Naive thymus-derived CD4-positive, alpha-beta T cell (primary cell): ENCODE measurements at regions of chr20 and their contacts with region 1.

Region 1: GRCh38 chr20:18412221-18412901 is 54.5 kb downstream of the DZANK1 start:
- DNase-seq: no peak
- ATAC-seq: peak; percentile 33
- H3K4me3 ChIP-seq: no peak overlapping the region
- H3K4me3 Mint-ChIP-seq: no peak overlapping the region
- H3K27ac ChIP-seq: no peak overlapping the region
- H3K27ac Mint-ChIP-seq: no peak overlapping the region
- H3K4me1 ChIP-seq: no peaks in the 10 kb centered on the region
- H3K4me1 Mint-ChIP-seq: peaks cover 0 to 7% (median 3%) of the 10 kb centered on the region in 7 donors
- H3K27me3 ChIP-seq: no peaks in the 10 kb centered on the region
- H3K27me3 Mint-ChIP-seq: no peaks in the 10 kb centered on the region

Region 2: DNA sequence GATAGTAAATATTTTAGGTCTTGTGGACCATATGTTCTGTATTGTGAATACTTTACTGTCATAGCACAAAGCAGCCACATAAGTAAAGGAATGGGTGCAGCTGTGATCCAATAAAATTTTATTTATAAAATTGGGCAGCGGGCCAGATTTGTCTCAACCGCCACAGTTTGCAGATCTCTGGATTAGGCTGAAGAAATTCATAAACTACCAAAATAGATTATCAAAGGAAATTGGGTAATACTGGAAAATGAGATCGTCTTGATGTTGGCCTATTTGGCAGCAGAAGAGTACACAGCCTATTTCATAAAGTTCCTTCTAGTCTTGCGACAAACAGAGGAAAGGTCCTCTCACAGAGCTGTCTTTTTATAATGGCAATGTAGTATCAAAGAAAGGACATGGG is 15.3 kb before region 1 on chr20:
- CTCF ChIA-PET with region 1: no interaction called
- POLR2A ChIA-PET with region 1: no interaction called
- intact Hi-C with region 1: no loop called
- DNase-seq: no peak
- ATAC-seq: no peak
- H3K4me3 ChIP-seq: no peak overlapping the region
- H3K4me3 Mint-ChIP-seq: no peak overlapping the region
- H3K27ac ChIP-seq: no peak overlapping the region
- H3K27ac Mint-ChIP-seq: no peak overlapping the region
- H3K4me1 ChIP-seq: no peaks in the 10 kb centered on the region
- H3K4me1 Mint-ChIP-seq: peaks cover 0 to 5% (median 0%) of the 10 kb centered on the region in 7 donors
- H3K27me3 ChIP-seq: no peaks in the 10 kb centered on the region
- H3K27me3 Mint-ChIP-seq: no peaks in the 10 kb centered on the region

Region 3: DNA sequence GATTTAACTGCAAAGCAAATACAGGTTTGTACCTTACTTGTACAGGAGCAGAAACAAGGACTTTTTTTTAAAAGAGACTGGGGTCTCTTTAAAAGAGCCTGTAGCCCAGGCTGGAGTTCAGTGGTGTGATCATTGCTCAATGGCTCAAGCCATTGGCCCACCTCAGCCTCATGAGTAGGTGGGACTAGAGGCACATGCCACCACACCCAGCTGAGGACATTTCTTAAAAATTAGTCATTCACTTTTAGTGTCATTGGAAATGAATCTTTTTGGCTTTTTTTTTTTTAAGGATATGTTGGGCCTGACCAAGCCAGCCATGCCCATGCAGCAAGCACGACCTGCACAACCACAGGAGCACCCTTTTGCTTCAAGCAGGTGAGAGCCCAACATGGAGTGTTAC is 112.3 kb after region 1 on chr20:
- CTCF ChIA-PET with region 1: interaction called, 4 read pairs
- POLR2A ChIA-PET with region 1: no interaction called
- intact Hi-C with region 1: loop called in 1 of 2 experiments (anchors 5 kb)
- DNase-seq: no peak
- ATAC-seq: no peak
- H3K4me3 ChIP-seq: no peak overlapping the region
- H3K4me3 Mint-ChIP-seq: no peak overlapping the region
- H3K27ac ChIP-seq: no peak overlapping the region
- H3K27ac Mint-ChIP-seq: peak overlapping the region in 2 of 9 donors; percentile 49 to 60
- H3K4me1 ChIP-seq: no peaks in the 10 kb centered on the region
- H3K4me1 Mint-ChIP-seq: peaks cover 0 to 4% (median 0%) of the 10 kb centered on the region in 7 donors
- H3K27me3 ChIP-seq: no peaks in the 10 kb centered on the region
- H3K27me3 Mint-ChIP-seq: no peaks in the 10 kb centered on the region

Region 4: GRCh38 chr20:18632196-18633009 is 220.0 kb after region 1 on chr20:
- CTCF ChIA-PET with region 1: no interaction called
- POLR2A ChIA-PET with region 1: no interaction called
- intact Hi-C with region 1: loop called (anchors 5 kb)
- DNase-seq: peak in 8 of 9 donors; percentile 1 to 52 (median 32)
- ATAC-seq: peak; percentile 80
- H3K4me3 ChIP-seq: no peak overlapping the region
- H3K4me3 Mint-ChIP-seq: no peak overlapping the region
- H3K27ac ChIP-seq: no peak overlapping the region
- H3K27ac Mint-ChIP-seq: no peak overlapping the region
- H3K4me1 ChIP-seq: no peaks in the 10 kb centered on the region
- H3K4me1 Mint-ChIP-seq: peaks cover 0 to 4% (median 0%) of the 10 kb centered on the region in 7 donors
- H3K27me3 ChIP-seq: no peaks in the 10 kb centered on the region
- H3K27me3 Mint-ChIP-seq: no peaks in the 10 kb centered on the region

Region 5: DNA sequence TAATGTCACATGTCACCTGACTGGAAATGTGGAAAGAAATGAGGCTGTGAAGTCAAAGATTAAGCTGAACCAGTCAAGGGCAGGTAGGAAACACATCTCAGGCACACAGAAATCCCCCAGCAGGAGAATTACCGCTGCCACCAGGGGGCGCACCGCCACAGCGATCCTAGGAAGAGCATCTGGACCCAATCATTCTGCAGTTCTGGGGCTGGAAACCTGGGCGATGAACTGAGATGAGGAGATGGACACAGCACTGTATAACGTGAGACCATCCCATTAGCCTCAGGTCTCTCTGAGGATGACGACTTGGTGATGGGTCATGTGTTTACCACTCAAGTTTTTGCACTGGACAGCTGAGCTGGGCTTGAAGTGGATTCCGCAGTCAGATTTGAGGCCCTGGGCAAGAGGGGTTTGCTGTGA is 793.6 kb after region 1 on chr20:
- CTCF ChIA-PET with region 1: no interaction called
- POLR2A ChIA-PET with region 1: no interaction called
- intact Hi-C with region 1: loop called in 1 of 2 experiments (anchors 5 kb)
- DNase-seq: peak in 8 of 9 donors; percentile 20 to 71 (median 41)
- ATAC-seq: peak; percentile 67
- H3K4me3 ChIP-seq: no peak overlapping the region
- H3K4me3 Mint-ChIP-seq: no peak overlapping the region
- H3K27ac ChIP-seq: no peak overlapping the region
- H3K27ac Mint-ChIP-seq: no peak overlapping the region
- H3K4me1 ChIP-seq: no peaks in the 10 kb centered on the region
- H3K4me1 Mint-ChIP-seq: no peaks in the 10 kb centered on the region
- H3K27me3 ChIP-seq: no peaks in the 10 kb centered on the region
- H3K27me3 Mint-ChIP-seq: peaks cover 18 to 70% (median 39%) of the 10 kb centered on the region in 5 donors